CD8-positive, alpha-beta T cell (primary cell): ENCODE measurements at regions of chr9 and their contacts with region 1.

Region 1: DNA sequence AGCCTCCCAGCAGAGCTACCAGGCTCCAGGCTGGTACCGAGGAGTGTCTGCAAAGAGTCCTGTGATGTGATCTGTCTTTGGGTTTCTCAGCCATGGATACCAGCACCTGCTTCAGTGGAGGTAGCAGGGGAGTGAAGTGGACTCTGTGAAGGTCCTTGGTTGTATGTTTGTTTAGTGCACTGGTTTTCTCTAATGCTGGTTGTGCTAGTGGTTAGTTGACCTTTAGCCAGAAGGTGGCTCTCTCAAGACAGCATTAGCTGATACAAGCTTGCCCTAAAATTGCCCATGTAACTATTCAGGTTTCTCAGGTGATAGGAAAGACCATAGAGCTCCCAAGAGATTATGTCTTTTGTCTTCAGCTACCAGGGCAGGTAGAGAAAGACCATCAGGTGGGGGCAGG is 87.2 kb downstream of the MTAP start:
- DNase-seq: peak in 1 of 9 experiments; percentile 1
- ATAC-seq: no peak
- H3K4me3 ChIP-seq: no peak overlapping the region
- H3K4me3 Mint-ChIP-seq: no peak overlapping the region
- H3K27ac ChIP-seq: no peak overlapping the region
- H3K27ac Mint-ChIP-seq: no peak overlapping the region
- H3K4me1 ChIP-seq: no peaks in the 10 kb centered on the region
- H3K4me1 Mint-ChIP-seq: no peaks in the 10 kb centered on the region
- H3K27me3 ChIP-seq: no peaks in the 10 kb centered on the region
- H3K27me3 Mint-ChIP-seq: no peaks in the 10 kb centered on the region
- CTCF ChIP-seq: no peak

Region 2: GRCh38 chr9:21873540-21874221 is 16.0 kb before region 1 on chr9:
- CTCF ChIA-PET with region 1: no interaction called
- POLR2A ChIA-PET with region 1: no interaction called
- intact Hi-C with region 1: no loop called
- DNase-seq: no peak
- ATAC-seq: no peak
- H3K4me3 ChIP-seq: no peak overlapping the region
- H3K4me3 Mint-ChIP-seq: no peak overlapping the region
- H3K27ac ChIP-seq: no peak overlapping the region
- H3K27ac Mint-ChIP-seq: no peak overlapping the region
- H3K4me1 ChIP-seq: no peaks in the 10 kb centered on the region
- H3K4me1 Mint-ChIP-seq: peaks cover 3% of the 10 kb centered on the region
- H3K27me3 ChIP-seq: no peaks in the 10 kb centered on the region
- H3K27me3 Mint-ChIP-seq: no peaks in the 10 kb centered on the region
- CTCF ChIP-seq: no peak

Region 3: GRCh38 chr9:21906881-21907280 is 17.2 kb after region 1 on chr9:
- CTCF ChIA-PET with region 1: no interaction called
- POLR2A ChIA-PET with region 1: no interaction called
- intact Hi-C with region 1: loop called in 1 of 2 experiments (anchors 1 kb)
- DNase-seq: no peak
- ATAC-seq: no peak
- H3K4me3 ChIP-seq: no peak overlapping the region
- H3K4me3 Mint-ChIP-seq: no peak overlapping the region
- H3K27ac ChIP-seq: no peak overlapping the region
- H3K27ac Mint-ChIP-seq: no peak overlapping the region
- H3K4me1 ChIP-seq: no peaks in the 10 kb centered on the region
- H3K4me1 Mint-ChIP-seq: no peaks in the 10 kb centered on the region
- H3K27me3 ChIP-seq: no peaks in the 10 kb centered on the region
- H3K27me3 Mint-ChIP-seq: no peaks in the 10 kb centered on the region
- CTCF ChIP-seq: no peak

Region 4: DNA sequence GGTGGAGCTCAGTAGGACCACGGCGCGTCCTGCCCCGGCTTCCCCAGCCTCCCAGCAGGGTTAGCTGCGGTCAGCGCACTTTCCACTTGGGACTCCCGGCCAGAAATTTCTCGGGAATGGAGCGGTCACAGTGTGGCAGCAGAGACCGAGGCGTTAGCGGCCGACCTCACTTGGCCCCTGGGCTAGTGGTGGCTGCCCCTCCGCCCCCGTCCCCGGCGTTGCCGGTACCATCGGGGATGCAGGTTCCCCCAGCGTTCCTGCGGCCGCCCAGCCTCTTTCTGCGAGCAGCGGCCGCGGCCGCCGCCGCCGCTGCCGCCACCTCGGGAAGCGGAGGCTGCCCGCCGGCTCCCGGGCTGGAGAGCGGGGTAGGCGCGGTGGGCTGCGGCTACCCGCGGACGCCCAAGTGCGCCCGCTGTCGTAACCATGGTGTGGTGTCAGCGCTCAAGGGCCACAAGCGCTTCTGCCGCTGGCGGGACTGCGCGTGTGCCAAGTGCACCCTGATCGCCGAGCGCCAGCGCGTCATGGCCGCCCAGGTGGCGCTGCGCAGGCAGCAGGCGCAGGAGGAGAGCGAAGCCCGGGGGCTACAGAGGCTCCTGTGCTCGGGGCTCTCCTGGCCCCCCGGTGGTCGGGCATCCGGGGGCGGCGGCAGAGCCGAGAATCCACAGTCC is 557.4 kb after region 1 on chr9:
- CTCF ChIA-PET with region 1: no interaction called
- POLR2A ChIA-PET with region 1: no interaction called
- intact Hi-C with region 1: no loop called
- DNase-seq: peak in 5 of 9 experiments; percentile 7 to 35 (median 26)
- ATAC-seq: peak; percentile 64
- H3K4me3 ChIP-seq: peak overlapping the region in 1 of 2 experiments; percentile 33
- H3K4me3 Mint-ChIP-seq: no peak overlapping the region
- H3K27ac ChIP-seq: no peak overlapping the region
- H3K27ac Mint-ChIP-seq: no peak overlapping the region
- H3K4me1 ChIP-seq: no peaks in the 10 kb centered on the region
- H3K4me1 Mint-ChIP-seq: peaks cover 10% of the 10 kb centered on the region
- H3K27me3 ChIP-seq: peaks cover 0 to 3% of the 10 kb centered on the region in 2 experiments
- H3K27me3 Mint-ChIP-seq: peaks cover 43% of the 10 kb centered on the region
- CTCF ChIP-seq: no peak